Cardiac septum (tissue), 1 donor: ENCODE measurements at regions of chr1 and their contacts with region 1.

Region 1: GRCh38 chr1:214029796-214030195 is 42.0 kb downstream of the PROX1 start:
- DNase-seq: no peak

Region 2: DNA sequence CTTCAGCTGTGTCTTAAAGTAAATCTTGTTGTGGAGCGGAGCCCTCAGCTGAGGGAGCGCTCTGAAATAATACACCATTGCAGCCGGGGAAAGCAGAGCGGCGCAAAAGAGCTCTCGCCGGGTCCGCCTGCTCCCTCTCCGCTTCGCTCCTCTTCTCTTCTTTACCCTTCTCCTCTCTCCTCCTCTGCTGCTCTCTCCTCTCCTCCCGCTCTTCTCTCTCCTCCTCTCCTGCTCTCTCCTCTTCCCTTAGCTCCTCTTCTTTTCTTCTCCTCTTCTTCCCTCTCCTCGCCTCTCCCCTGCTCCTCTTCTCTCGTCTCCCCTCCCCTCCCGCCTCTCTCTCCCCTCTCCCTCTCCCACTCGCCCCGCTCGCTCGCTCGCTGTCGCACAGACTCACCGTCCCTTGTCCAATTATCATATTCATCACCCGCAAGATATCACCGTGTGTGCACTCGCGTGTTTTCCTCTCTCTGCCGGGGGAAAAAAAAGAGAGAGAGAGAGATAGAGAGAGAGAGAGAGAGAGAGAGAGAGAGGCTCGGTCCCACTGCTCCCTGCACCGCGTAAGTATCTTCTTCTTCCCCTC is 41.8 kb before region 1 on chr1 and contains the start of gene PROX1:
- intact Hi-C with region 1: loop called (anchors 2 kb)
- DNase-seq: no peak
- total RNA-seq, gene PROX1: 110 TPM

Region 3: DNA sequence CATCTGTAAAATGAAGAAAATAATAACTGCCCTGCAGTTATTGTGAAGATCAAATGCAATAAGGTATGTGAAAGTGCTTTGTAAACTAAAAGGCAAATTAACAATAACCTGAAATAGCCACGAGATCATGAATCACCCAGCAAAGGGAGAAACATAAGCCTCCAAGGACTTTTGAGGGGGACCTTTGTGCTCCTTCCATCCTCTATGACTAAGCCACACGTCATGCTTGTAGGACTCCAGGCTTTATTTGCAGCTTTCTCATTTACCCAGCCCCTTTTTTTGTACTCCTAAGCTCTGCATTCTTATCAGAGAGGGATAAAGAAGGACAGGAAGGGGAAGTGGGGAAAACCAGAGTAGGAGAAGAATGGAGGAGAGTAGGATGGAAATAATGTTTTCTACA is 73.1 kb after region 1 on chr1:
- intact Hi-C with region 1: loop called (anchors 1 kb)
- DNase-seq: no peak